ENCODE measurements at regions of chr1 and their contacts with region 1.

Region 1: DNA sequence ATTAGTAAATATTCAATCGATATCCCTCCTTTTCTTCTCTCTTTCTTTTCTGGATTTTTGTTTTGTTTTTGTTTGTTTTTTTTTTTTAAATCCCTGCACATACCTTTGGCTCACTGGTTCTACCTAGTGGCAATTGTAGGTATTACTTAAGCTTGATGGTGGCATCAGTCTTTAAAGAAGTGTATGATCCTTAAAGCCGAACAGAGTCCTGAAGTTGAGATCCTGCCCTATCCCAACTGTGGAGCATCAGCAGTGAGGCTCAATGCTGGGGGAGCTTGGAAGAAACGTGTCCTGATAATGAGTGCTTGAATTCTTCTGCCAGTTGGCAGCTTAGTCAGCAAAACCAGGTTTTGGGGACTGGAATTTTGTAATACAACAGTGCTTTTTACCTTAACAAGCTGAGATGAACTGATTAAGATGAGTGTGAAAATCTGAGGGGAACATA is 60.8 kb downstream of the FASLG start:
- DNase-seq: peak; percentile 55
- ATAC-seq: peak; percentile 56
- H3K4me3 ChIP-seq: no peak overlapping the region
- H3K4me3 Mint-ChIP-seq: no peak overlapping the region
- H3K27ac ChIP-seq: no peak overlapping the region
- H3K27ac Mint-ChIP-seq: no peak overlapping the region
- H3K4me1 ChIP-seq: peaks cover 3 to 5% of the 10 kb centered on the region in 2 donors
- H3K4me1 Mint-ChIP-seq: peaks cover 7% of the 10 kb centered on the region
- H3K27me3 ChIP-seq: no peaks in the 10 kb centered on the region
- H3K27me3 Mint-ChIP-seq: peaks cover 3% of the 10 kb centered on the region
- CTCF ChIP-seq: peak; percentile 90

Region 2: GRCh38 chr1:171801487-171801891 is 918.2 kb before region 1 on chr1:
- CTCF ChIA-PET with region 1: no interaction called
- POLR2A ChIA-PET with region 1: no interaction called
- intact Hi-C with region 1: loop called (anchors 5 kb)
- DNase-seq: peak; percentile 38
- ATAC-seq: peak; percentile 51
- H3K4me3 ChIP-seq: no peak overlapping the region
- H3K4me3 Mint-ChIP-seq: no peak overlapping the region
- H3K27ac ChIP-seq: no peak overlapping the region
- H3K27ac Mint-ChIP-seq: no peak overlapping the region
- H3K4me1 ChIP-seq: peaks cover 7 to 11% of the 10 kb centered on the region in 2 donors
- H3K4me1 Mint-ChIP-seq: peaks cover 15% of the 10 kb centered on the region
- H3K27me3 ChIP-seq: no peaks in the 10 kb centered on the region
- H3K27me3 Mint-ChIP-seq: no peaks in the 10 kb centered on the region
- CTCF ChIP-seq: peak; percentile 82

Region 3: DNA sequence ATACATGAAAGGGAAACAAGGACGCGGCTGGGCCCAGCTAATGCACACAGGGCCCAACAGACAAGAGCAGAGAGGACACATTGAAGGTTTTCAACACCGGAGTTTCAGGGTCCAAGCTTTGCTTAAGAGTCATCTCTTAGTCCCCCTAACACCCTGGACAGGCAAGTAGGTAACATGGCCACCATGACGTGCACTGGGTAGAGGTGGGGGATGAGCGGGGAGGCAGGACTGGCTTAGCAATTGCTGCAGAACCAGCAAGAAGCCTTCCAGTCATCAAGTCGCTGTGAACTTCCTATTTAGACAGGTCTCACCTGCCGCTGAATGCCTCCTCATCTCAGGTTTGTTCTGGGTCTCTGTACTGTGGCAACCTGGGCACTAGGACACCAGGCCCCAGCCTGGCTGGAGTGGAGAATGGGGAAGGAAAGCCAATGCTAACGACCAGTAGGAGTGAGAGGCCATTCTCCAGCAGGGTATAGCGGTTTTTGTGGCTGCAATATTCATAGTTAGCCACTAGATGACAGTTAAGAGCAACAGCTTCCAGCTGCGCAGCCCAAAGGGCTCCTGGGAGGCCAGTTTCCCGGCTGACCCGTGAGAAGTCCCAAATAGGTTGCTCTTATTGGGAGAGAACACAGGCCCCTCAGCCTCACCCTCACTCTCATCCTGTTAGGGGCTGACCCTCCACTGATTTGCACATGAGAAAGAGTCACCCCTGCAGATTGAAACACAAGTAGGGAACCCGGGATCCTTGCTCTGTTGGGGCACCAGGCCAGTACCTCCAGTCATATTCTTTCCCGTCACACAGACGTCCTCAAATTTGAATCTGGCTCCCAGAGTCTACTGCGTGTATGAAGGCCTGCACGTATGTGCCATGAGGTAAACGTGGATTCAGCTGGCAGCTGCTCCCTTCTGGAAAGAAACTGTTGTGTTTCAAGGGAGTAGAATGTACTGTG is 269.9 kb before region 1 on chr1:
- CTCF ChIA-PET with region 1: interaction called, 32 read pairs
- POLR2A ChIA-PET with region 1: no interaction called
- intact Hi-C with region 1: no loop called
- DNase-seq: peak; percentile 61
- ATAC-seq: peak; percentile 93
- H3K4me3 ChIP-seq: no peak overlapping the region
- H3K4me3 Mint-ChIP-seq: no peak overlapping the region
- H3K27ac ChIP-seq: no peak overlapping the region
- H3K27ac Mint-ChIP-seq: no peak overlapping the region
- H3K4me1 ChIP-seq: peaks cover 0 to 6% of the 10 kb centered on the region in 2 donors
- H3K4me1 Mint-ChIP-seq: peaks cover 6% of the 10 kb centered on the region
- H3K27me3 ChIP-seq: no peaks in the 10 kb centered on the region
- H3K27me3 Mint-ChIP-seq: no peaks in the 10 kb centered on the region
- CTCF ChIP-seq: peak; percentile 81

Region 4: DNA sequence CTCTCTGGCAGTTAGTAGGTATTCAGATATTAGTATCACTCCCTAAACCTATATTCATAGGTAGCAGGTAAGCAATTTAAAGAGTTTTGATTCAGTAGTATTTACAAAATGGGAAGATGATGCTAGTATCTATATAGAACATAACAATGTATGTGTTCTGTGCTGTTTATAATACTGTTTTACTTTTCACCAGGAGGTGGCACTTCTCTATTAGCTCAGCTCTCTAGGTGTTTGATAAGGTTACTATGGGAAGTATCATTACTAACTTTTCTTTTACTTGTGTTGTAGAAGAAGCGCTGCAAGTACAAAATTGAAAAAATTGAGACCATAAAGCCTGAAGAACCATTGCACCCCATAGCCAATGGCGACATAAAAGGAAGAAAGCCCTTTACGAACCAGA is 110.2 kb before region 1 on chr1:
- CTCF ChIA-PET with region 1: interaction called, 60 read pairs
- POLR2A ChIA-PET with region 1: no interaction called
- intact Hi-C with region 1: loop called (anchors 1 kb)
- DNase-seq: no peak
- ATAC-seq: no peak
- H3K4me3 ChIP-seq: no peak overlapping the region
- H3K4me3 Mint-ChIP-seq: no peak overlapping the region
- H3K27ac ChIP-seq: no peak overlapping the region
- H3K27ac Mint-ChIP-seq: no peak overlapping the region
- H3K4me1 ChIP-seq: no peaks in the 10 kb centered on the region
- H3K4me1 Mint-ChIP-seq: no peaks in the 10 kb centered on the region
- H3K27me3 ChIP-seq: no peaks in the 10 kb centered on the region
- H3K27me3 Mint-ChIP-seq: no peaks in the 10 kb centered on the region
- CTCF ChIP-seq: no peak

Region 5: DNA sequence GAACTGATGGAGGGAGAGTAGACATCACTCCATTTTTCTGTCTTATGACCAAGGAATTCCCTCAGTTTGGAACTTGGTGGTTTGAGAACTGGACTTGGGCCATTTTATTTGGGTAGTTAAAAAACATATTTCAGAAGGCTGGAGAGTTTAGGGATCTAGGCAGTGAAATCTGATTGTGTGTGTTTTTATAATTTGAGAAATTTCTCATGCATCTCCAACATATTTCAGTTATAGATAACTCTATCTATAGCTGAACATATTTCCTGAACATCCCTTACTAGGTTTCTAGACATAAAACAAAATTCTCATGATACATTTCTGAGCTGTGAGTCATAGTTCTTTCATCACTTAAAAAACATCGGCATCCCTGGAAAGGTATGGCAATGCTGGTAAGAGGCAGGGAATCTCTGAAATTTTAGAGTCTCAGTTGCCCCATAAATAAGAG is 41.9 kb after region 1 on chr1:
- CTCF ChIA-PET with region 1: no interaction called
- POLR2A ChIA-PET with region 1: no interaction called
- intact Hi-C with region 1: no loop called
- DNase-seq: no peak
- ATAC-seq: no peak
- H3K4me3 ChIP-seq: no peak overlapping the region
- H3K4me3 Mint-ChIP-seq: no peak overlapping the region
- H3K27ac ChIP-seq: no peak overlapping the region
- H3K27ac Mint-ChIP-seq: no peak overlapping the region
- H3K4me1 ChIP-seq: peaks cover 23 to 24% of the 10 kb centered on the region in 2 donors
- H3K4me1 Mint-ChIP-seq: peaks cover 33% of the 10 kb centered on the region
- H3K27me3 ChIP-seq: peaks cover 0 to 6% (median 0%) of the 10 kb centered on the region in 4 experiments
- H3K27me3 Mint-ChIP-seq: peaks cover 7% of the 10 kb centered on the region
- CTCF ChIP-seq: no peak

Measured in B cell (primary cell).